ENCODE measurements at regions of chr12 and their contacts with region 1.

Region 1: GRCh38 chr12:8890313-8891085 is 23.8 kb upstream of the PHC1 start:
- DNase-seq: no peak
- ATAC-seq: peak; percentile 88
- H3K4me3 ChIP-seq: peak overlapping the region; percentile 44 to 55
- H3K27ac ChIP-seq: no peak overlapping the region
- H3K4me1 ChIP-seq: peaks cover 0 to 4% of the 10 kb centered on the region in 2 experiments; a peak in 1 of 4 replicates
- H3K27me3 ChIP-seq: no peaks in the 10 kb centered on the region
- CTCF ChIP-seq: peak; percentile 80 to 83 (median 82)
- POLR2A ChIP-seq: no peak
- RAD21 ChIP-seq: peak; percentile 72

Region 2: GRCh38 chr12:8465306-8465996 is 425.0 kb before region 1 on chr12:
- CTCF ChIA-PET with region 1: no interaction called
- POLR2A ChIA-PET with region 1: no interaction called
- RAD21 ChIA-PET with region 1: no interaction called
- intact Hi-C with region 1: no loop called
- DNase-seq: no peak
- ATAC-seq: no peak
- H3K4me3 ChIP-seq: no peak overlapping the region
- H3K27ac ChIP-seq: no peak overlapping the region
- H3K4me1 ChIP-seq: no peaks in the 10 kb centered on the region
- H3K27me3 ChIP-seq: peaks cover 16% of the 10 kb centered on the region; the same call in 1 of the 2 replicates
- CTCF ChIP-seq: no peak
- POLR2A ChIP-seq: no peak
- RAD21 ChIP-seq: no peak

Region 3: GRCh38 chr12:8662593-8662992 is 227.9 kb before region 1 on chr12 and contains the start of gene MFAP5:
- CTCF ChIA-PET with region 1: interaction called, 36 read pairs
- POLR2A ChIA-PET with region 1: no interaction called
- RAD21 ChIA-PET with region 1: interaction called, 3 to 10 read pairs
- intact Hi-C with region 1: no loop called
- DNase-seq: no peak
- ATAC-seq: no peak
- H3K4me3 ChIP-seq: no peak within 1 kb of the TSS
- H3K27ac ChIP-seq: no peak within 1 kb of the TSS
- H3K4me1 ChIP-seq: 0 out of 4 replicates have a peak, but pooled peaks cover 0 to 3% of the 10 kb centered on the region in 2 experiments
- H3K27me3 ChIP-seq: peaks cover 16% of the 10 kb centered on the region
- CTCF ChIP-seq: no peak
- POLR2A ChIP-seq: no peak
- RAD21 ChIP-seq: no peak
- total RNA-seq, gene MFAP5: not detected

Region 4: DNA sequence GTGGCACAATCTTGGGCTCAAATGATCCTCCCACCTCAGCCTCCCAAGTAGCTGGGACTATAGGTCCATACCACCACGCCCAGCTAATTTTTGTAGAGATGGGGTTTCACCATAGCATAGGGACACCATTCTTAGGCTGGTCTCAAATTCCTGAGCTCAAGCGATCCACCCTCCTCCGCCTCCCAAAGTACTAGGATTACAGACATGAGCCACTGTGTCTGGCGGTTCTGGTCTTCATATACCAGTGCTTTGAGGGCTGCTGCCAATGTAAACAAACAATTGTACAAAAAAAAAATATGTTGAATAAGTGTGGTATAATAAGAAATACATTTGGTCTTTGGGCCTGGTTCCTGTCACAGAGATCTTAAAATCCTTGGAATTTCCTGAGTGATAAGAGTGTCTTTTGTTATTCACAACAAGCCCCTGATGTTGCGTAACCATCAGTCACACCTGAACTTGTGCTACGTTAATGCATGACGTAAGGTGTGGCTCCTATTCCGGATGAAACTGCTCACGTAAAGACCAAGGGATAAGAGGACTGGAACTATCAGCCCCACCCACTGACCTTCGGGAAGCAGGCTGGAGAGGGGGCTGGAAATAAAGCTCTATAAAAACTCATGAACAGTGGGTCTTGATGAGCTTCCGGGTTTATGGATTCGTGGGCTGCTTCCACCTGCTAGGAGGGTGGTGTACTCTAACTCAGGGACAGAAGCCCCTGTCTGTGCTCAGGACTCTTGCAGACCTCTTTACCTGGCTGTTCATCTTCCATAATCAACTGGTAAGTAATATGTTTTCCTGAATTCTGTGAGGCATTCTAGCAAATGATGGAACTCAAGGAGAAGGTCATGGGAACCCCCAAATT is 209.2 kb before region 1 on chr12:
- CTCF ChIA-PET with region 1: interaction called, 17 read pairs
- POLR2A ChIA-PET with region 1: no interaction called
- RAD21 ChIA-PET with region 1: interaction called in 1 of 2 experiments, 5 read pairs
- intact Hi-C with region 1: loop called (anchors 1 kb)
- DNase-seq: no peak
- ATAC-seq: 0 out of 2 replicates have a peak, but pooled peaks have one; percentile 11
- H3K4me3 ChIP-seq: no peak overlapping the region
- H3K27ac ChIP-seq: no peak overlapping the region
- H3K4me1 ChIP-seq: peaks cover 2% of the 10 kb centered on the region in 2 experiments; a peak in 1 of 4 replicates
- H3K27me3 ChIP-seq: no peaks in the 10 kb centered on the region
- CTCF ChIP-seq: no peak
- POLR2A ChIP-seq: no peak
- RAD21 ChIP-seq: no peak

Region 5: GRCh38 chr12:8780389-8780788 is 110.1 kb before region 1 on chr12:
- CTCF ChIA-PET with region 1: interaction called, 8 read pairs
- POLR2A ChIA-PET with region 1: no interaction called
- RAD21 ChIA-PET with region 1: no interaction called
- intact Hi-C with region 1: loop called (anchors 1 kb)
- DNase-seq: peak; percentile 18
- ATAC-seq: peak; percentile 88
- H3K4me3 ChIP-seq: no peak overlapping the region
- H3K27ac ChIP-seq: no peak overlapping the region
- H3K4me1 ChIP-seq: no peaks in the 10 kb centered on the region
- H3K27me3 ChIP-seq: 0 out of 2 replicates have a peak, but pooled peaks cover 13% of the 10 kb centered on the region
- CTCF ChIP-seq: peak; percentile 27 to 49 (median 43); a peak in 5 of 6 replicates
- POLR2A ChIP-seq: no peak
- RAD21 ChIP-seq: peak; percentile 58

Region 6: GRCh38 chr12:8870586-8870985 is 19.9 kb before region 1 on chr12:
- CTCF ChIA-PET with region 1: interaction called, 15 read pairs
- POLR2A ChIA-PET with region 1: interaction called, 3 read pairs
- RAD21 ChIA-PET with region 1: no interaction called
- intact Hi-C with region 1: no loop called
- DNase-seq: no peak
- ATAC-seq: no peak
- H3K4me3 ChIP-seq: no peak overlapping the region
- H3K27ac ChIP-seq: no peak overlapping the region
- H3K4me1 ChIP-seq: no peaks in the 10 kb centered on the region
- H3K27me3 ChIP-seq: no peaks in the 10 kb centered on the region
- CTCF ChIP-seq: no peak
- POLR2A ChIP-seq: no peak
- RAD21 ChIP-seq: no peak

Region 7: DNA sequence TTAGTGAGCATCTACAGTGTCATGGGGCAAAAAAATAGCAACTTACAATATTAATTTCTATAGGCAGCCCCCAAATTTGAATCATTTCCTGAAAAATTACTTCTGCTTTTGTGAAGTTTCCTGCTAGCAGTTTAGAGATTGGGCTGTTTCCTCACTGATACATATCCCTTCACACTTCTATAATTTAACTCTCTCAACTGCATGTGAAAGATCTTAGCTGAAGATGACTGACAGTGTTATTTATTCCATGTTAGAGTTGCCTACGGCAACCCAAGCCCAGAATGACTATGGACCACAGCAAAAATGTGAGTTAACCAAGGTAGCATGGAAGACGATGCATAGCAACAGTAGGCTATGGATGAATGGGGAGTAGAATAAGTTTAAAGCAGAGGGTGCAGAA is 98.9 kb after region 1 on chr12 and contains the start of gene KLRG1:
- CTCF ChIA-PET with region 1: no interaction called
- POLR2A ChIA-PET with region 1: no interaction called
- RAD21 ChIA-PET with region 1: no interaction called
- intact Hi-C with region 1: no loop called
- DNase-seq: no peak
- ATAC-seq: no peak
- H3K4me3 ChIP-seq: no peak within 1 kb of the TSS
- H3K27ac ChIP-seq: no peak within 1 kb of the TSS
- H3K4me1 ChIP-seq: no peaks in the 10 kb centered on the region
- H3K27me3 ChIP-seq: no peaks in the 10 kb centered on the region
- CTCF ChIP-seq: no peak
- POLR2A ChIP-seq: no peak
- RAD21 ChIP-seq: no peak
- total RNA-seq, gene KLRG1: 1.5 TPM

Region 8: DNA sequence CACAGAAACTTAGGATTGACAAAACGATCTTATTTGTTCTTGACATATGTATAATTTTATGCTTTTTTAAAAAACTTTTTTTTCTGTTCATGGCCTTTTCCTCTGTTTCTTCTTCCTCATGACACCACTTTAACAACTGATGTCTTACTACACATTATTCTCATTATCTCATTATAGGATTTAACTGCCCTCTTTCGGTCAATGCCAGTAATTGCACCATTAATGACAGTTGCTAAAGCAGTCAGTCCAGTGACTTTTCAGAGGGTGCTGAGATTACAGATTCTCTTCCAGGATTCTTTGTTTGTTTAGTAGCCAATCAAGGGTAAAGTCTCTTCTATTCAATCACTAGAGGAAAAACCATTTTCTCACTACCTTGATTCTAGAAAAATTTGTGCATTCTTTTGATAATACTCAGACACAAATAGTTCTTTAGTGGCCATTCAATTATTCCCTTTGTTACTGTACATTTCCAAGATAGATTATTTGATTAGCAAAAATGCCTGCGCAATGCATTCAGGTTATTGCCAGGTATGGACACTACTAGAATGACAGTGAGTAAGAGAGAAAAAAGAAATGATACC is 149.0 kb after region 1 on chr12:
- CTCF ChIA-PET with region 1: interaction called, 5 read pairs
- POLR2A ChIA-PET with region 1: no interaction called
- RAD21 ChIA-PET with region 1: no interaction called
- intact Hi-C with region 1: loop called (anchors 5 kb)
- DNase-seq: peak; percentile 18
- ATAC-seq: peak; percentile 84
- H3K4me3 ChIP-seq: no peak overlapping the region
- H3K27ac ChIP-seq: no peak overlapping the region
- H3K4me1 ChIP-seq: no peaks in the 10 kb centered on the region
- H3K27me3 ChIP-seq: 0 out of 2 replicates have a peak, but pooled peaks cover 4% of the 10 kb centered on the region
- CTCF ChIP-seq: peak; percentile 55 to 77 (median 57); a peak in 5 of 6 replicates
- POLR2A ChIP-seq: no peak
- RAD21 ChIP-seq: peak; percentile 78

Region 9: DNA sequence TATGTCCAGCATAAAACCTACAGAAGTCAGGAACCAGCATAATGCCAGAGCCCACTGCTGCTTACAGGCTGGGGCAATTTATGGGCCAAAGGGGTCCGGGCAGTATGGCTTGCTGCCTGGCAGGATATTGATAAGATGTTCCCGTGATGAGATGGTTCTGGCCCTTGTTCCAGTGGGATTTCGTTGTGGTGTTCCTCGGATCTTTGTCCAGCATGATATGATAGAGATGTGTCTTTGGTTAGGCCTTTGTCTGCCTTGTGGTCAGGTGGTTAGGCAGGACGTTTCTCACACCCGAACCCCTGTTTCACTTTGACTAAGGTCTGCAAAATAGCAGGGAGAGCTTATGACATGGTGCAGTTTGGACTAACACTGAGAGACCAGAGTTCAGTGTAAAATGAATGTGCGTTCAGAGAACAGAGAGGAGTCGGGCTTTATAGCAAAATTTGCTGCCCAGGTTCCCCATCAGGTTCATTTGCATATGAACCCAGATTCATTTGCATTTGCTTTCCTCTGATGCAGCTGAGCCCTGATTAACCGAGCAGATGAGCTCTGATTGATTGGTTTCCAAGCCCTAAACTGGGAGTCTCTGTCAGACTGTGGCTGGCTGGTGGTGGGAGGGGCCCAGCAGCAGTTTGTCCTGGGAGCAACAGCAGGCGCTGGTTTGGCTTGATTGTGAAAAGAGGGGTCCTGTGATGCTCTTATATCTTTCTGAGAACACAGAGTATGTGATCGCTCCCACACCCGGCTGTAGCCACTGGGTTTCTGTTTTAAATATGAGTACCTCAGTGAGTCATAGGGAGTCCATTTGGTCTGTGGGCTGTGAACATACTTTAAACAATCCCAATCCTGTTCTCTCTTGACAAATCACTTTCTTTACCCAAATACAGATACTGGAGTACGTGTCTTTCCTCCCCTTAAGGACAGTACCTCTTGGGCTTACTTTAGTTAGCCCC is 474.0 kb after region 1 on chr12:
- CTCF ChIA-PET with region 1: no interaction called
- POLR2A ChIA-PET with region 1: no interaction called
- RAD21 ChIA-PET with region 1: no interaction called
- intact Hi-C with region 1: no loop called
- DNase-seq: no peak
- ATAC-seq: peak; percentile 44; the same call in 1 of the 2 replicates
- H3K4me3 ChIP-seq: no peak overlapping the region
- H3K27ac ChIP-seq: no peak overlapping the region
- H3K4me1 ChIP-seq: peaks cover 0 to 7% of the 10 kb centered on the region in 2 experiments; a peak in 2 of 4 replicates
- H3K27me3 ChIP-seq: no peaks in the 10 kb centered on the region
- CTCF ChIP-seq: no peak
- POLR2A ChIP-seq: no peak
- RAD21 ChIP-seq: no peak